PC-9 (cell line): ENCODE measurements at regions of chr13 and their contacts with region 1.

Region 1: DNA sequence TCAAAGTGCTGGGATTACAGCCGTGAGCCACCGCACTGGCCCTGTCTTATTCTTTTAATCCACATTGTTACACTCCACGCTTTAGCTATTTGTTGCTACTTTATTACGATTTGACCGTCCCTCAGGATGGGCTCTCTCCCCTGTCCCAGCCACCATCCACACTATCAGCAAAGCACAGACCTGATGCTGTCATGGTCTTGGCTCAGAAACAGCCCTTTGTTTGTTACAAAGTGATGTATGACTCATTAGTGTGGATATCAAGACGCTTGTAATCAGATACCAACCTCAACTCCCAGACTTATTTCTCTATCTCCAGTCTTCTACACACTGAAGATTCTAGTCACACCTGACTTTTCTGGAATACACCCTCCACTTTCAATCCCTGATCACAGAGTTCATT is 84.6 kb upstream of the FREM2 start:
- DNase-seq: peak in 1 of 2 experiments; percentile 1
- H3K4me3 ChIP-seq: no peak overlapping the region
- H3K27ac ChIP-seq: no peak overlapping the region
- H3K4me1 ChIP-seq: no peaks in the 10 kb centered on the region
- H3K27me3 ChIP-seq: no peaks in the 10 kb centered on the region
- CTCF ChIP-seq: no peak

Region 2: DNA sequence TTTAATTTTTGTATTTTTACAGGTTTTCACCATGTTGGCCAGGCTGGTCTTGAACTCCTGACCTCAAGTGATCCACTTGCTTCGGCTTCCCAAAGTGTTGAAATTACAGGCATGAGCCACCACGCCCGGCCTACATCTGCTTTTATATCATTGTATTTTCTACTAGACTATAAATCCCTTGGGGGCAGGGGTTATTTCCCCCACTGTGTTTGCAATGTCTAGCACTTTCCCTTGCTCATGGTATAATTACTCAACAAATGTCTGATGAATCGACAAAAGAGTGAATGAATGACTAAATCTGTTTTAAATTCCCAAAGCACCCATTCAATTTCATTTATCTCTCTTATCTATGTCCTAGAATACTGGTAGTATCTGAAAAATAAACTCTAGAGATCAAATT is 1252.3 kb before region 1 on chr13:
- CTCF ChIA-PET with region 1: no interaction called
- POLR2A ChIA-PET with region 1: no interaction called
- intact Hi-C with region 1: loop called (anchors 5 kb)
- DNase-seq: no peak
- H3K4me3 ChIP-seq: no peak overlapping the region
- H3K27ac ChIP-seq: no peak overlapping the region
- H3K4me1 ChIP-seq: no peaks in the 10 kb centered on the region
- H3K27me3 ChIP-seq: no peaks in the 10 kb centered on the region
- CTCF ChIP-seq: no peak

Region 3: DNA sequence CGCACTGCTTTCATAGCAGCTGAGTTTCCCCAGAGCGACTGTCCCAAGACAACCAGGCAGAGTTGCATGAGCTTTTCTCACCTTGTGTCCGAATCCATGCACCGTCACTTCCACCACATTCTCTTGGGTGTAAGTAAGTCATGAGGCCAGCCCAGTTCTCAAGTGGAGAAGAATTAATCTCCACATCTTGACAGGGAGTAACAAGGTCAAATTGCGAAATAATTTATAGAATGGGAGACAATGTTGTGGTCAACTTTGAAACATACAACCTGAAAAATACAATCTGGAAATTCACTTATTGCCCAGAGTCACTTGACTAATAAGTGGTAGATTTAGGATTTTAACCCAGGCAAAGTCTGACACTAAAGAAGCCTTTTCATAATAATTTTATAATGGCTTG is 129.0 kb before region 1 on chr13:
- CTCF ChIA-PET with region 1: no interaction called
- POLR2A ChIA-PET with region 1: no interaction called
- intact Hi-C with region 1: no loop called
- DNase-seq: no peak
- H3K4me3 ChIP-seq: no peak overlapping the region
- H3K27ac ChIP-seq: no peak overlapping the region
- H3K4me1 ChIP-seq: no peaks in the 10 kb centered on the region; the same call in 1 of the 2 replicates
- H3K27me3 ChIP-seq: no peaks in the 10 kb centered on the region
- CTCF ChIP-seq: no peak

Region 4: DNA sequence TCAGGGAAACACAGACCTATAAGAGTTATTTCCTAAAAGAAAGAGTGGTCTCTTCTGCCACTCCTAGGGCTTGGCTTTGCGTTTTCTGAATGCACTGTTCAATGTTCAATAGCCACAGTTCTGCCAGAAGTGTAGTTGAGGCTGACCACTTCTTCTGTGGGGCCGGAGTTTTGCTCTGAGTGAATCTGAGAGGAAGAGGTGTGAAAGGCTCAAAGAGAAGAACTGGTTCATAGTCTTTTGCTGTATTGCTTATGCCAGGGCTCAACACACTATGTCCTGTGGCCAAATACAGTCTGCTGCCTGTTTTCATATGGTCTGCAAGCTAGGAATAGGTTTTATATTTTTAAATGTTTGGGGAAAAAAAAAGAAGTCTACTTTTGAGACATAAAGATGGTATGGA is 260.2 kb after region 1 on chr13:
- CTCF ChIA-PET with region 1: no interaction called
- POLR2A ChIA-PET with region 1: no interaction called
- intact Hi-C with region 1: no loop called
- DNase-seq: no peak
- H3K4me3 ChIP-seq: no peak overlapping the region
- H3K27ac ChIP-seq: no peak overlapping the region
- H3K4me1 ChIP-seq: no peaks in the 10 kb centered on the region
- H3K27me3 ChIP-seq: no peaks in the 10 kb centered on the region
- CTCF ChIP-seq: no peak